ENCODE measurements at regions of chr5 and their contacts with region 1.

Region 1: GRCh38 chr5:40882291-40882690 is 27.0 kb upstream of the C7 start:
- DNase-seq: no peak

Region 2: DNA sequence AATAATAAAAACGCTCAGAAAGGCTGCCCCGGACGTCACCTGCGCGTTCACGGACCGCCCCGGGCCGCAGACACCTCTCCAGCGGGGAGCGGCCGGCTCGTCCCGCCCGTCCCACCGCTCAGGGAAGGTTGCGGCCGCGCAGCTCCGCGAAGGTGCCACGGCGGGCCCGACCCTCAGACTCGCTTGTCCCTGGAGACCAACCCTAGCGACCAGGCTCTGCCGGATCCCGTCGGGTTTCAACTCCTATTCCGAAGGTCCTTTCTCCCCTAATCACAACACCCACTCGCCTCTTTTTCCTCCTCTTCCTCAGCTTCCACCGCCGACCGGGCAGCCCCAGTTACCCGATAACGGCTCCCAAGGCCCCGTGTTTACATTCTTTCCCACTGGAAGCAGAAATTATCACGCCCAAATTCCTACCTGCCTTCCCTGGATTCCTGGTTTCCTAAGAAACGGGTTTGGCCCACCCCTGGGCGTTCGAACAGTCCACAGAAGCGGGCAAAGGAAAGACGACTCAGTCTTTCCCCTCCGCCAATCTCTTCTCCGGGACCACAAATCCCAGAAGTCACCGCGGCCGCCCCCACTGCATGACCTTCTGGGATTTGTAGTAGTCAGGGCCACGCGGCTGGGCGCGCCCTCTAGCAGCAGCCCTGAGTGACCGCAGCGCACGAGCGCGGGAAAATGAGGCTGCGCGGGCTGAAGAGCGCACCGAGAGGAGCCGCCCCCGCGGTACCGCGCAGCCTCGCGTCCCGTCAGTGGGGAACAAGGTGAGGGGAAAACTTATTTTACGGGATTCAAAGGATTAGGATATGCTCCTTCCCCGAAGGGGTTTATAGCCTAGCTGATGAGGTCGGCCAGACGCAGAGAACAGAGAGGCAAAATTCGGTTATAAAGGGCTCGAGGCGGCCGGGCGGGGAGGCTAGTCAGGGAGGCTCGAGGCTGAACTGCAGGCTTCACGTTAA is 126.6 kb before region 1 on chr5 and contains the start of gene TTC33:
- intact Hi-C with region 1: loop called (anchors 5 kb)
- DNase-seq: peak; percentile 99
- total RNA-seq, gene TTC33: 19.1 TPM

Region 3: DNA sequence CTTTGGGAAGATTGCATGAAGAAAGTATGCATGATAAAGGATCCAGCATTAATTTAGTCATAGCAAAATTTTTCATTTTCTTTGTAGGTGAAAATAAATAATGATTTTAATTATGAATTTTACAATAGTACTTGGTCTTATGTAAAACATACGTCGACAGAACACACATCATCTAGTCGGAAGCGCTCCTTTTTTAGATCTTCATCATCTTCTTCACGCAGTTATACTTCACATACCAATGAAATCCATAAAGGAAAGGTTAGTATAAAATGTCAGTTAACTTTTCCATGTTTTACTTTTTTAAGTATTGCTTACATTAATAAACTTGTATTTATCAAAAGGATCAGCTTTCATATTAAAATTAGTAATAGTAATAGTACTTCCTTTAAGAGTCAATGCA is 62.8 kb after region 1 on chr5:
- intact Hi-C with region 1: no loop called
- DNase-seq: no peak

Measured in cardiac septum (tissue), 1 donor.